ENCODE measurements at regions of chr15 and their contacts with region 1.

Region 1: DNA sequence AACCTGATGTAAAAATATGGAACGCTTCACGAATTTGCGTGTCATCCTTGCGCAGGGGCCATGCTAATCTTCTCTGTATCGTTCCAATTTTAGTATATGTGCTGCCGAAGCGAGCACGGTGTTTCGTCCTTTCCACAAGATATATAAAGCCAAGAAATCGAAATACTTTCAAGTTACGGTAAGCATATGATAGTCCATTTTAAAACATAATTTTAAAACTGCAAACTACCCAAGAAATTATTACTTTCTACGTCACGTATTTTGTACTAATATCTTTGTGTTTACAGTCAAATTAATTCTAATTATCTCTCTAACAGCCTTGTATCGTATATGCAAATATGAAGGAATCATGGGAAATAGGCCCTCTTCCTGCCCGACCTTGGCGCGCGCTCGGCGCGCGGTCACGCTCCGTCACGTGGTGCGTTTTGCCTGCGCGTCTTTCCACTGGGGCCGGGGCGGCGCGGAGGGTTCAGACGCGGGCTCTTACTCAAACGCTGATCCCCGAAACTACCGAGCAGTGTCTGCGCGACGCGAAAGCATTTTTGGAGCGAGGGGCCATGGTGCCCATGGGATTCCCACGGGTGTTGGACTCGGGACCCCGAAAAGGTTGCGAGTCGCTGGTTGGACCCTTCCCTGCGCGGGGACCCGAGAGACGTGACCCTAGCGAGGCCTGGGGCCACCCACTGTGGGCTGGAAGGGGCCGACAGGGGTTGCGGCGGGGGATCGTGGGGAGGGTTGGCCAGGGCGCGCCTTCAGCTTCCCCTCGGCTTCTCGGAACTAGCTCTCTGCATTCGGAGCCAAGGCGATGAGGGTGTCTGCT is at the start of gene RNU6-1:
- DNase-seq: peak; percentile 94 to 98 (median 96)
- ATAC-seq: peak; percentile 79
- H3K4me3 ChIP-seq: peak within 1 kb of the TSS; percentile 85
- H3K4me3 Mint-ChIP-seq: peak within 1 kb of the TSS; percentile 97
- H3K27ac ChIP-seq: peak within 1 kb of the TSS; percentile 73 to 83
- H3K27ac Mint-ChIP-seq: peak within 1 kb of the TSS; percentile 99
- H3K4me1 ChIP-seq: peaks cover 42% of the 10 kb centered on the region
- H3K4me1 Mint-ChIP-seq: peaks cover 54% of the 10 kb centered on the region
- H3K27me3 ChIP-seq: peaks cover 10 to 12% of the 10 kb centered on the region in 2 experiments
- H3K27me3 Mint-ChIP-seq: peaks cover 21% of the 10 kb centered on the region
- CTCF ChIP-seq: no peak
- total RNA-seq, gene RNU6-1: not detected

Region 2: DNA sequence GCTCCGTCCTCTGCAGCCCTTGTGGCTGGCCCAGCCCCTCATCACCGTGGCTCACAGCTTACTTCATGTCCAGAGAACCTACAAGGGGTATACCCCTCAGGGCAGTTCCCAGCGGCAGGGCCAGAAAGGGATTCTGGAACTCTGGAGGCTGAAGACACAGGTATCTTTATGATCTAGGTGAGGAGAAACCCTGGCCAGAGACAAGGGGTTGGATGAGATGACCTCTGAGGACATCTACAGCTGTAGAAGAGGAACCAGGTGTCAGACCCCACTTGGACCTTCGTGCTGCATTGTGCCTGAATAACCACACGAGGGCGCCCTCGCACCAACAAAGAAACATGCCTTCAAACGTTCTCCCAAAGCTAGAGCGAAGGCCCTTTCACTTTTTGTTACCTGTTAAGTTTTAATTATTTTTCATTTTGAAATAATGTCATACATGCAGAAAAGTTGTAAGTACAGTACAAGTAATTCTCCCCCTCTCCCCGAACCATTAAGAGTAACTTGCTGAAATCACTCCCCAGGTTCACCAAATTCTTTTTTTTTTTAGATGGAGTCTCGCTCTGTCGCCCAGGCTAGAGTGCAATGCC is 893.5 kb before region 1 on chr15:
- CTCF ChIA-PET with region 1: interaction called, 3 read pairs
- POLR2A ChIA-PET with region 1: no interaction called
- intact Hi-C with region 1: loop called (anchors 5 kb)
- DNase-seq: peak; percentile 49 to 88 (median 70)
- ATAC-seq: peak; percentile 83
- H3K4me3 ChIP-seq: no peak overlapping the region
- H3K4me3 Mint-ChIP-seq: no peak overlapping the region
- H3K27ac ChIP-seq: no peak overlapping the region
- H3K27ac Mint-ChIP-seq: no peak overlapping the region
- H3K4me1 ChIP-seq: no peaks in the 10 kb centered on the region
- H3K4me1 Mint-ChIP-seq: no peaks in the 10 kb centered on the region
- H3K27me3 ChIP-seq: no peaks in the 10 kb centered on the region
- H3K27me3 Mint-ChIP-seq: no peaks in the 10 kb centered on the region
- CTCF ChIP-seq: peak; percentile 87

Region 3: DNA sequence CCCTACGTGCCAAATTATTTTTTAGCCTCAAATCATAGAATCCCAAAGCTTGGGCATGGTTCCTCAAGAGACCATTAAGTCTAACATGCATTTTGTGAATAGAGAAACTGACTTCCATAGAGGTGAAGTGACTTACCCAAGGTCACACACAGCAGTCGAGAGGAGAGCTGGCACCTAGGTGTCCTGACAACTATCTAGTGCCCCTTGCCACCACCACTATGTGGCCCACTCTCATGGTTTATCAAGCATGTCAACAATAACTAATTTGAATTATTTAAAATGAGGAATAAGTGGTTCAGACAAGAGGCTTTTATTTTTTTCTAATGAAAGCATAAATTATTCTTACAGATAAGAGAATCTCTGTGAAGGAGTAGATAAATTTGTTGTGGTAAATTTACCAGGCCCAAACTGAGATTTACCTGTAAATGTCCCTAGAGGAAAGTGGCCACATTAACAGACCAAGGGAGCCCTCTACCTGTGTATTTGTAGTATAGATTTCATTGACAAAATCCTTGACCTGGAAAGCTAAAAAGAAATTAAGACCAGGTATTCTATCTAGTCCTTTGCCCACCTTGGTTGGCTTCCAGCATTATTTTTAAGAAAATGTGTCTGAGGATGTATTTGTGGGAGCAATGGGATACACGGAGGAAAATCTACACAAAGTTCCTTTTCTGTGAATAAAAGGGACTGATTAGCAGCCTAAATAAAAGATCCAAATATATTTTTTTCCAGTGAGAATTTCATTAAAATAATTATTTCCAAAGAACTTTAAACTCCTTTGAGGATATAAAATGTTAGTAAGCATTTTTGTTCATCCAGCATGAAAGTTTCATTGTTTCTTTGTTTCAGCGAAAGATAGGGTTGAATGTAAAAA is 536.4 kb before region 1 on chr15:
- CTCF ChIA-PET with region 1: no interaction called
- POLR2A ChIA-PET with region 1: no interaction called
- intact Hi-C with region 1: loop called in 1 of 2 experiments (anchors 10 kb)
- DNase-seq: peak in 10 of 14 experiments; percentile 0 to 74 (median 12)
- ATAC-seq: peak; percentile 59
- H3K4me3 ChIP-seq: no peak overlapping the region
- H3K4me3 Mint-ChIP-seq: no peak overlapping the region
- H3K27ac ChIP-seq: no peak overlapping the region
- H3K27ac Mint-ChIP-seq: no peak overlapping the region
- H3K4me1 ChIP-seq: no peaks in the 10 kb centered on the region
- H3K4me1 Mint-ChIP-seq: no peaks in the 10 kb centered on the region
- H3K27me3 ChIP-seq: no peaks in the 10 kb centered on the region
- H3K27me3 Mint-ChIP-seq: no peaks in the 10 kb centered on the region
- CTCF ChIP-seq: peak; percentile 79

Region 4: GRCh38 chr15:67501177-67501835 is 338.8 kb before region 1 on chr15:
- CTCF ChIA-PET with region 1: no interaction called
- POLR2A ChIA-PET with region 1: no interaction called
- intact Hi-C with region 1: loop called (anchors 2 to 5 kb)
- DNase-seq: peak in 3 of 14 experiments; percentile 28 to 39 (median 35)
- ATAC-seq: no peak
- H3K4me3 ChIP-seq: no peak overlapping the region
- H3K4me3 Mint-ChIP-seq: no peak overlapping the region
- H3K27ac ChIP-seq: no peak overlapping the region
- H3K27ac Mint-ChIP-seq: no peak overlapping the region
- H3K4me1 ChIP-seq: no peaks in the 10 kb centered on the region
- H3K4me1 Mint-ChIP-seq: no peaks in the 10 kb centered on the region
- H3K27me3 ChIP-seq: no peaks in the 10 kb centered on the region
- H3K27me3 Mint-ChIP-seq: no peaks in the 10 kb centered on the region
- CTCF ChIP-seq: peak; percentile 49

Region 5: GRCh38 chr15:67542420-67543347 is 297.5 kb before region 1 on chr15 and contains the start of gene MAP2K5:
- CTCF ChIA-PET with region 1: interaction called, 3 read pairs
- POLR2A ChIA-PET with region 1: interaction called, 8 read pairs
- intact Hi-C with region 1: loop called (anchors 5 to 10 kb)
- DNase-seq: peak; percentile 73 to 91 (median 81)
- ATAC-seq: peak; percentile 76
- H3K4me3 ChIP-seq: peak within 1 kb of the TSS; percentile 77
- H3K4me3 Mint-ChIP-seq: peak within 1 kb of the TSS; percentile 93
- H3K27ac ChIP-seq: peak within 1 kb of the TSS; percentile 74 to 78
- H3K27ac Mint-ChIP-seq: peak within 1 kb of the TSS; percentile 99
- H3K4me1 ChIP-seq: peaks cover 14% of the 10 kb centered on the region
- H3K4me1 Mint-ChIP-seq: peaks cover 58% of the 10 kb centered on the region
- H3K27me3 ChIP-seq: no peaks in the 10 kb centered on the region
- H3K27me3 Mint-ChIP-seq: no peaks in the 10 kb centered on the region
- CTCF ChIP-seq: no peak
- total RNA-seq, gene MAP2K5: 22.2 to 27.9 TPM

Region 6: GRCh38 chr15:67746450-67746849 is 93.7 kb before region 1 on chr15:
- CTCF ChIA-PET with region 1: no interaction called
- POLR2A ChIA-PET with region 1: no interaction called
- intact Hi-C with region 1: no loop called
- DNase-seq: peak in 4 of 14 experiments; percentile 22 to 55 (median 37)
- ATAC-seq: peak; percentile 34
- H3K4me3 ChIP-seq: no peak overlapping the region
- H3K4me3 Mint-ChIP-seq: peak overlapping the region; percentile 52
- H3K27ac ChIP-seq: no peak overlapping the region
- H3K27ac Mint-ChIP-seq: peak overlapping the region; percentile 45
- H3K4me1 ChIP-seq: peaks cover 15% of the 10 kb centered on the region
- H3K4me1 Mint-ChIP-seq: peaks cover 66% of the 10 kb centered on the region
- H3K27me3 ChIP-seq: no peaks in the 10 kb centered on the region
- H3K27me3 Mint-ChIP-seq: no peaks in the 10 kb centered on the region
- CTCF ChIP-seq: no peak

Region 7: DNA sequence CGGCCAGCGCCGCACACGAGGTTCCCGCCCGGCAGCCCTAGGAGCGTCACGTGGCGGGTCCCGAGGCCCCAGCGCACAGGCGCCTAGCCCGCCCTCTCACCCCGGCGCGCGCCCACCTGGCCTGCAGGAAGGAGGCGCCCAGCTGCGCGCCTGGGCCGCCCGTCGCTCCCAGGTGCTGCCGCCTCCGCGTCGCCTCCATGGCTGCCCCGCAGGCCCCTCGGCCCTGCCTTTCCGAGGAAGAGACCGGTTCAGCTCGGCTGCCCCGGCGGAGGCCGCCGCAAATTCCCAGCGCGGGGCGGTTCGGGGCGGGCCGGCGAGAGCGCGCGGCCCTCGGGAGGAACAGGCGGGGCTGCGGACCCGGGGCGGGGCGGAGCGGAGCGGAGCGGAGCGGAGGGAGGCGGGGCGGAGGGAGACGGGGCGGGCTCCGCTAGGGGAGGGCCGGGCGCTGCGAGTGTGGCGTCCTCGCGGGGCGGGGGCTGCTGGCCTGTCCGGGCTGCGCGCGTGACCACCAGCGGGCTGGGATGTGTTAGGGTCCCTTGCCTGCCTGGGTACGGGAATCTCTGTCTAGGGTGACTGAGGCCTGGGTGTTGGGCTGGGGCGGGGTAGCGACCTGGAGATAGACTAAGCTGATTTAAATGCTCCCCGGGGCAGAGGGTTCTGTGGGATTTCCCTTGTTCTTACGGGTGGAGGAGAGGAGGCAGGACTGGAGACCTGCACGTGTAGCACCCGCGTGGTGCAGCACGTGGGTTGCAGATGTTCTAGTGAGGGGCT is 389.4 kb after region 1 on chr15 and contains the start of gene CLN6:
- CTCF ChIA-PET with region 1: no interaction called
- POLR2A ChIA-PET with region 1: interaction called, 6 read pairs
- intact Hi-C with region 1: loop called in 1 of 2 experiments (anchors 2 kb)
- DNase-seq: peak; percentile 57 to 93 (median 75)
- ATAC-seq: peak; percentile 82
- H3K4me3 ChIP-seq: peak within 1 kb of the TSS; percentile 88
- H3K4me3 Mint-ChIP-seq: peak within 1 kb of the TSS; percentile 92
- H3K27ac ChIP-seq: peak within 1 kb of the TSS in 1 of 2 donors; percentile 34
- H3K27ac Mint-ChIP-seq: peak within 1 kb of the TSS; percentile 73
- H3K4me1 ChIP-seq: peaks cover 29% of the 10 kb centered on the region
- H3K4me1 Mint-ChIP-seq: peaks cover 28% of the 10 kb centered on the region
- H3K27me3 ChIP-seq: no peaks in the 10 kb centered on the region
- H3K27me3 Mint-ChIP-seq: no peaks in the 10 kb centered on the region
- CTCF ChIP-seq: no peak
- total RNA-seq, gene CLN6: 8.0 to 8.1 TPM

Region 8: GRCh38 chr15:68464448-68465090 is 624.4 kb after region 1 on chr15:
- CTCF ChIA-PET with region 1: no interaction called
- POLR2A ChIA-PET with region 1: no interaction called
- intact Hi-C with region 1: no loop called
- DNase-seq: no peak
- ATAC-seq: no peak
- H3K4me3 ChIP-seq: no peak overlapping the region
- H3K4me3 Mint-ChIP-seq: no peak overlapping the region
- H3K27ac ChIP-seq: no peak overlapping the region
- H3K27ac Mint-ChIP-seq: no peak overlapping the region
- H3K4me1 ChIP-seq: no peaks in the 10 kb centered on the region
- H3K4me1 Mint-ChIP-seq: no peaks in the 10 kb centered on the region
- H3K27me3 ChIP-seq: peaks cover 0 to 4% of the 10 kb centered on the region in 2 experiments
- H3K27me3 Mint-ChIP-seq: peaks cover 11% of the 10 kb centered on the region
- CTCF ChIP-seq: no peak

Measured in CD4-positive, alpha-beta T cell (primary cell).